ENCODE measurements at regions of chrX and their contacts with region 1.

Region 1: GRCh38 chrX:23901805-23902204 is 5.9 kb downstream of the APOO start:
- DNase-seq: no peak
- ATAC-seq: peak; percentile 73 to 86 (median 78)
- H3K4me3 ChIP-seq: peak overlapping the region; percentile 15
- H3K27ac ChIP-seq: peak overlapping the region; percentile 71
- H3K4me1 ChIP-seq: peaks cover 19% of the 10 kb centered on the region
- H3K27me3 ChIP-seq: no peaks in the 10 kb centered on the region
- CTCF ChIP-seq: peak; percentile 40

Region 2: DNA sequence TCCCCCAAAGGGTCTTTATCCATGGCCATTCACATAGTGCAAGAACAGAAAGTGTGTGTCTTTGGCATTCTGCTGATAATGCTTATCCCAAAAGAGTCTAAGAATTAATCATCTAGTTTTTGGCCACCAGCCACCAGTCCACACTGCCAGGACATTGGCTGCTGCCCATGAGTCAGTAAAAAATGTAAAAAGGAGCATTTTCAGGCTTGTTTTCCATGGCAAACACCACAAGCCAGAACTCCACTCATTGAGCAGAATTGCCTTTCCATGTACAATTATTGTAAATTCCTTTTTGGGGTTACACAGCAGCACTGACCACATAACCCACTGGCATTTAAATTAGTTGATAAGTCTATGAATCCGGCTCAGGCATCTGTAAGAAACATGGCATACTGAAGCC is 323.7 kb before region 1 on chrX:
- intact Hi-C with region 1: no loop called
- DNase-seq: no peak
- ATAC-seq: no peak
- H3K4me3 ChIP-seq: no peak overlapping the region
- H3K27ac ChIP-seq: no peak overlapping the region
- H3K4me1 ChIP-seq: no peaks in the 10 kb centered on the region
- H3K27me3 ChIP-seq: no peaks in the 10 kb centered on the region
- CTCF ChIP-seq: no peak

Region 3: GRCh38 chrX:23694606-23695005 is 207.2 kb before region 1 on chrX:
- intact Hi-C with region 1: loop called (anchors 1 to 5 kb)
- DNase-seq: peak; percentile 41 to 62
- ATAC-seq: peak; percentile 41 to 80 (median 70)
- H3K4me3 ChIP-seq: no peak overlapping the region
- H3K27ac ChIP-seq: no peak overlapping the region
- H3K4me1 ChIP-seq: no peaks in the 10 kb centered on the region
- H3K27me3 ChIP-seq: no peaks in the 10 kb centered on the region
- CTCF ChIP-seq: peak; percentile 41

Region 4: DNA sequence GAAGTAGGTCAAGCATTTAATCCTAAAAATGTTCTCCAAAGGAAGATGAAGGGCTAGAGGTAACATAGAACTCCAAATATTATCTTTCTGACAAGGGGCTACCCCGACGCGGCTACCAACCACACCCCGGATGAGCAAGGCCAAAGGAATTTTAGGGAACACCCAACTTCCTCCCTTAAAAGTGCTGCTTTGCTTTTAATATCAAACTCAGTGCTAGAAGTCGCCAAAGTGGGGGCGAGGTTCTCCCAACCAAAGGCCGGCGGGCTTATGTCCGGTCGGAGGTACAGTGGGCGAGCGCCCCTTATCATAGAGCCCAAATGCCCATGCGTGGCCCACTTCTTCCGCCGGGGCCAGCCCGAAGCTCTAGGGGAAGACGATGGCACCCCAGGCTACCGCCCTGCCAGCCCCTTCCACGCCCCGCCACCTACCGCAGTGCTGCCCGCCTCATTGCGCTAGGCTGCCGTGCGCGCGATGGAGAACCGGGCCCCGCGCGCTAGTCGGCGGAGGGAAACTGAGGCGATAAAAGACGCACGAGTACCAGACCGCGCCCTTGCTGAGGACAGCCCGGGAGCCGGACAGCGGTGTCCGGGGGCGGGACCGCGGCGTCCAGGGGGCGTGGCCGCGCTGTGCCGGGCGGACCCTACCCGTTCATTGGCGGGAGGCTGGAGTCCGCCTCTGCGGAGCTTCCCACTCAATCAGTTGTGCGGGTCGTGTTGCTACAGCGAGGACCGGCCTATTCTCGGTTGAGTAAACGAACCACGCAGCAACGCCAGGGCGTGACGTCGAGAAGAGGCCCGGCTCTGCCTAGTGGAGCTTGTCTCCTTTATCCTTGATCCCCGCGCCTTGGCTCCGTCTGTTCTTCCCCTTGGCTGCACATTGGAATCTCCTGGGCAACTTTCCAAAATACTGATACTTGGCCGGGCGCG is 158.8 kb before region 1 on chrX and contains the start of gene ACOT9:
- intact Hi-C with region 1: loop called in 1 of 2 experiments (anchors 2 kb)
- DNase-seq: peak; percentile 95 to 96
- ATAC-seq: peak; percentile 96 to 98 (median 96)
- H3K4me3 ChIP-seq: peak within 1 kb of the TSS; percentile 79
- H3K27ac ChIP-seq: peak within 1 kb of the TSS; percentile 98
- H3K4me1 ChIP-seq: no peaks in the 10 kb centered on the region
- H3K27me3 ChIP-seq: no peaks in the 10 kb centered on the region
- CTCF ChIP-seq: no peak
- total RNA-seq, gene ACOT9: 21.7 to 58.9 (median 44.5) TPM

Region 5: DNA sequence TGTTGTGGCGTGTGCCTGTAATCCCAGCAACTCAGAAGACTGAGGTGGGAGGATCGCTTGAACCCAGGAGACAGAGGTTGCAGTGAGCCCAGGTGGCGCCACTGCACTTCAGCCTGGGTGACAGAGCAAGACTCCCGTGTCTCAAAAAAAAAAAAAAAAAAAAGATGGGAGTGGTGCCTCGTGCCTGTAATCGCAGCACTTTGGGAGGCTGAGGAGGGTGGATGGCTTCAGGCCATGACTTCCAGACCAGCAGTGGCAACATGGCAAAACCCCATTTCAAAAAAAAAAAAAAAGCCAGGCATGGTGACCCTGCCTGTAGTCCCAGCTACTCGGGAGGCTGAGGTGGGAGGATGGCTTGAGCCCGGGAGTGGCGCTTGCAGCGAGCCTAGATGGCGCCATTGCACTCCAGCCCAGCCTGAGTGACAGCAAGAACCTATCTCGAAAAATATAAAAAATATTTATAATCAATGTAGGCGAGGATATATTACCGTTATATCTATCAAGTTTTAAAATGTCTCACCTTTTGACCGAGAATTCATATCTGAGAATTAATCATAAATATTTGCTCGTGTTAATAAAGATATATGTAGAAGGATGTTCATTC is 180.0 kb after region 1 on chrX:
- intact Hi-C with region 1: no loop called
- DNase-seq: peak; percentile 27 to 71
- ATAC-seq: peak; percentile 44 to 84 (median 76)
- H3K4me3 ChIP-seq: no peak overlapping the region
- H3K27ac ChIP-seq: no peak overlapping the region
- H3K4me1 ChIP-seq: no peaks in the 10 kb centered on the region
- H3K27me3 ChIP-seq: no peaks in the 10 kb centered on the region
- CTCF ChIP-seq: peak; percentile 42

Measured in psoas muscle (tissue), 8 donors.